ENCODE measurements at regions of chr12 and their contacts with region 1.

Region 1: GRCh38 chr12:66288121-66288520 is 14.2 kb upstream of the HELB start:
- DNase-seq: peak; percentile 91
- H3K4me3 Mint-ChIP-seq: peak overlapping the region; percentile 2
- H3K27ac Mint-ChIP-seq: peak overlapping the region; percentile 85
- H3K4me1 Mint-ChIP-seq: peaks cover 60% of the 10 kb centered on the region
- H3K27me3 Mint-ChIP-seq: no peaks in the 10 kb centered on the region

Region 2: DNA sequence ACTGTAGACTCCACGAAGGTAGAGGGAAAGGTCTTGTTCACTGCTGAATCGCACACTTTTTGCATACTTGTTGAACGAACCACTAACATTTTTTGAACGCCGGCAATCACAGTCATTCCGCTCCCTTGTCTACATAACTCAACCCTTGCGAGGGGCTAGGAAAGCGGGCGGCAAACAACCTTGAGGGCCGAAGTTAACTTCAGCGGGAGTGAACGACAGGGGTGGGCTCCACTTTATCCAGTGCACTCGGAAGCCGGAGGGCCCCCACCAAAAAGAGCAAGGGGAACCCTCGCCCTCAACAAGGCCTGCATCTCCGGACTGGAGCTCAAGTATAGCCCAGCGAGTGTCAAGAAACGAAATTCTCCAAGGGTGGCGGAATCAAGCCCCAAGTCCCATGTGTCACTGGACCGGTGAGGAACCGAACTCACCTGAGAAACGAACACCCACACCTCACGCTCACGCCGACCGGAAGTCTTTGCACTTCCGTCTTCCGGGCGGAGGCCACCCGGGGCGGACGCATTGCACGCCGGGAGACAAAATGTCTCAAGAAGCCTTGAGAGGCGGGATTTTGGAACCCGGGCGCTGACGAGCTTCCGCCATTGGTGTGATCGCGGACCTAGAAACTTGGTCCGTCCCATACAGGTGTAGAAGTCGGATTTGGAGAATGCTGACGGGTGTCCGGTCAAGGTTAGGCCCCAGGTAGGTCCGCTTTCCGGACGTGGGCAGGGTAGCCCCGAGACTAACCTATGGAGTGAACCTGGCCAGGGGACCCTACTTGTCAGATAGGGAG is 157.6 kb before region 1 on chr12 and contains the start of gene LLPH:
- intact Hi-C with region 1: loop called (anchors 5 kb)
- DNase-seq: peak; percentile 97
- H3K4me3 Mint-ChIP-seq: peak within 1 kb of the TSS; percentile 96
- H3K27ac Mint-ChIP-seq: peak within 1 kb of the TSS; percentile 97
- H3K4me1 Mint-ChIP-seq: peaks cover 32% of the 10 kb centered on the region
- H3K27me3 Mint-ChIP-seq: no peaks in the 10 kb centered on the region
- total RNA-seq, gene LLPH: 33.5 and 35.2 TPM in 2 replicates